ENCODE measurements at regions of chr17 and their contacts with region 1.

Region 1: DNA sequence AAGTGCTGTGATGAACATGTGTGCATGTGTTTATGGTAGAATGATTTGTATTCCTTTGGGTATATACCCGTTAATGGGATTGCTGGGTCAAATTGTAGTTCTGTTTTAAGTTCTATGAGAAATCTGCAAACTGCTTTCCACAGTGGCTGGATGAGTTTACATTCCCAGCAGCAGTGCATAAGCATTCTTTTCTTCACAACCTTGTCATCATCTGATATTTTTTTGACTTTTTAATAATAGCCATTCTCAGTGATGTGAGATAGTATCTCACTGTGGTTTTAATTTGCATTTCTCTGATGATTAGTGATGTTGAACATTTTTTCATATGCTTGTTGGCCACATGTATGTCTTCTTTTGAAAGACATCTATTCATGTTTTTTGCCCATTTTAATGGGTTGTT is 18.5 kb downstream of the CCL8 start:
- DNase-seq: no peak
- H3K4me3 ChIP-seq: no peak overlapping the region
- H3K27ac ChIP-seq: no peak overlapping the region
- H3K4me1 ChIP-seq: no peaks in the 10 kb centered on the region
- CTCF ChIP-seq: no peak

Region 2: GRCh38 chr17:34269969-34270368 is 67.7 kb before region 1 on chr17 and contains the start of gene CCL7:
- CTCF ChIA-PET with region 1: no interaction called
- POLR2A ChIA-PET with region 1: no interaction called
- intact Hi-C with region 1: loop called (anchors 10 kb)
- DNase-seq: no peak
- H3K4me3 ChIP-seq: no peak within 1 kb of the TSS
- H3K27ac ChIP-seq: no peak within 1 kb of the TSS
- H3K4me1 ChIP-seq: no peaks in the 10 kb centered on the region
- CTCF ChIP-seq: no peak
- total RNA-seq, gene CCL7: not detected in 2 replicates

Region 3: DNA sequence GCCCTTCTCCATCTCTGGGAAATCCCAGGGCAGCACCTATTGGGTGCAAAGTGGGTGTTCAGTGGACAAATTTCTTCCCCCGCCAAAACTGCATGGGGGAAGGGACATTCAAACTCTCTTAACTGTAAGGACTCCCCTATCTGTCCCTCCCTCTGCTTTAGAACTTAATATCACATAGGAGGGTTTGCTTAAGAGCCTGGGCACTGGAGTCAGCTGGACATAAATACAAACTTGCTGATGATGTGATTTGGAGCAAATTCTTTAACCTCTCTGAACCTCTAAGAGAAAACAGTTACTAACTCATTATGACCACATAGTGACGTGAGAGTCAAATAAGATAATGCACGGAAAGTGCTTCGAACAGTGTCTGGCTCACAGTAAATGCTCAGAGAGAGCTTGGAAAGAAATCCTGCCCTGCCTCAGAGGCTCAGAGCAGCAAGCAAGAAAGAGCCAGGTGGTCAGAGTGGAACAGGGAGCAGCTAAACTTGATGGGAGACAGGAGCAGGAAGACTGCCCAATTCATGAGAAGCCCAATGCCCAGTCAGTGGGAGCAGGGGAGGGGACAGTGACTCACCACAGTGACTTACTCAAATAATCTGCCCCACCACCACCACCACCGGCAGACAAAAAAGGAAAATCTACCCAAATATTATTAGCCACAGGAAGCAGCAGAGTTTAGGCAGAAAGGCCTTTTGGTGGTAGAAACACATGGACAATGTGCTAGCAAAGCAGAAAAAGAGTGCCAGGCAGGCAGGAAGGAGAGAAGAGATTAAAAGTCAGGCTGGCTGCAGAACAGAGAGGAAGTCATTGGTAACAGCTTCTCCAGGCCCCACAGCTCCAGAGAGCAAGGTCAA is 49.2 kb after region 1 on chr17:
- CTCF ChIA-PET with region 1: no interaction called
- POLR2A ChIA-PET with region 1: no interaction called
- intact Hi-C with region 1: no loop called
- DNase-seq: peak; percentile 57
- H3K4me3 ChIP-seq: peak overlapping the region; percentile 8
- H3K27ac ChIP-seq: peak overlapping the region; percentile 58
- H3K4me1 ChIP-seq: peaks cover 81% of the 10 kb centered on the region
- CTCF ChIP-seq: no peak